Activated T-helper 2 cell treated with anti-CD3 and anti-CD28 coated beads, Interferon-gamma antibody, Interleukin-2, Interleukin-4, amounts not matched to agents 10 μg/mL and 5 μg/mL and 100 μg/mL, durations not matched to agents 14 hours and 24 hours and 36 hours (primary cell): ENCODE measurements at regions of chr15 and their contacts with region 1.

Region 1: GRCh38 chr15:40085266-40085665 is 23.4 kb downstream of the BMF start:
- DNase-seq: no peak
- H3K4me3 Mint-ChIP-seq: no peak overlapping the region
- H3K27ac Mint-ChIP-seq: no peak overlapping the region
- H3K4me1 Mint-ChIP-seq: peaks cover 36% of the 10 kb centered on the region
- H3K27me3 Mint-ChIP-seq: peaks cover 8% of the 10 kb centered on the region

Region 2: GRCh38 chr15:40098489-40099261 is 13.4 kb after region 1 on chr15:
- intact Hi-C with region 1: loop called (anchors 2 kb)
- DNase-seq: peak; percentile 73
- H3K4me3 Mint-ChIP-seq: peak overlapping the region; percentile 67
- H3K27ac Mint-ChIP-seq: peak overlapping the region; percentile 97
- H3K4me1 Mint-ChIP-seq: peaks cover 76% of the 10 kb centered on the region
- H3K27me3 Mint-ChIP-seq: no peaks in the 10 kb centered on the region